ENCODE measurements at regions of chr14 and their contacts with region 1.

Region 1: GRCh38 chr14:75783184-75783583 is 122.1 kb downstream of the TTLL5 start:
- DNase-seq: no peak
- H3K4me3 ChIP-seq: no peak overlapping the region
- H3K27ac ChIP-seq: no peak overlapping the region
- H3K4me1 ChIP-seq: no peaks in the 10 kb centered on the region
- H3K27me3 ChIP-seq: no peaks in the 10 kb centered on the region
- CTCF ChIP-seq: no peak
- POLR2A ChIP-seq: no peak

Region 2: DNA sequence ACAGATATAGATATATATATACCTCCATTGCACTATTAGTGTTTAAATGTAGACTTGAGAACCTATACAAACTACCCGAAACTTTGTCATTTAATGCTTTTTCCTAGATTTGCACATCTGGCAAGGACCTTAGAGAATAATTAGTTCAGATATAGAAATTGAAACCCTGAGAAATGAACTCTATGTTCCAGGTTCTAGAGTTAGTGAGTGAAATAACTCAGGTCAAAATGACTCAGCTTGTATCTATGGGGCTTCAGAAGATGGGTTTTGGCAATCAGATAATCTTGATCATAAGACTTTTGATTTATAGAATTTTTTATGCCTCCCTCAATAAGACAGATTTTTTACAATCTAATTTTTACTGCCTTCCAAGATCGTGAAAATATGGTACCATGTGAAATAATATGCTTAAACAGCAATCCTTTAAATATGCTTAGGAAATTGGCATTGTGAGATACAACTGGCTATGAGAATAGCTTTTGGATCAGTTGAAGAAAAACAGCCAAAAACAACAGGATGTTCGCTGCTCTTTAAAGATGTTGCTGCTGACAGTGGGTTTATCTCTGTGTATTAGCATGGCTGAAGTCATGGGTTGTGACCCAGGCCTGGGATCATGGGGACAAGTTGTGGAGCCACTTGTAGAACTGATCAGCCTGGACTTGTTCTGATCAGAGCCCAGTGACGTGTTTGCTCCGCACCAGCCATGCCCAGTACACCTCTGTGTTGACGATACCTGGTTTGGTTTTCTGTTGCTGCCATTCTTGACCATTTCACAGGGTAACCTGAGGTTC is 58.6 kb before region 1 on chr14:
- intact Hi-C with region 1: loop called (anchors 1 kb)
- DNase-seq: no peak
- H3K4me3 ChIP-seq: no peak overlapping the region
- H3K27ac ChIP-seq: peak overlapping the region; percentile 56
- H3K4me1 ChIP-seq: peaks cover 34% of the 10 kb centered on the region
- H3K27me3 ChIP-seq: no peaks in the 10 kb centered on the region
- CTCF ChIP-seq: no peak
- POLR2A ChIP-seq: no peak

Region 3: GRCh38 chr14:75752907-75753594 is 30.1 kb before region 1 on chr14:
- intact Hi-C with region 1: no loop called
- DNase-seq: no peak
- H3K4me3 ChIP-seq: no peak overlapping the region
- H3K27ac ChIP-seq: peak overlapping the region; percentile 17
- H3K4me1 ChIP-seq: peaks cover 10% of the 10 kb centered on the region
- H3K27me3 ChIP-seq: no peaks in the 10 kb centered on the region
- CTCF ChIP-seq: no peak
- POLR2A ChIP-seq: no peak

Region 4: GRCh38 chr14:75861161-75861621 is 78.0 kb after region 1 on chr14:
- intact Hi-C with region 1: no loop called
- DNase-seq: no peak
- H3K4me3 ChIP-seq: no peak overlapping the region
- H3K27ac ChIP-seq: no peak overlapping the region
- H3K4me1 ChIP-seq: no peaks in the 10 kb centered on the region
- H3K27me3 ChIP-seq: no peaks in the 10 kb centered on the region
- CTCF ChIP-seq: no peak
- POLR2A ChIP-seq: no peak

Region 5: DNA sequence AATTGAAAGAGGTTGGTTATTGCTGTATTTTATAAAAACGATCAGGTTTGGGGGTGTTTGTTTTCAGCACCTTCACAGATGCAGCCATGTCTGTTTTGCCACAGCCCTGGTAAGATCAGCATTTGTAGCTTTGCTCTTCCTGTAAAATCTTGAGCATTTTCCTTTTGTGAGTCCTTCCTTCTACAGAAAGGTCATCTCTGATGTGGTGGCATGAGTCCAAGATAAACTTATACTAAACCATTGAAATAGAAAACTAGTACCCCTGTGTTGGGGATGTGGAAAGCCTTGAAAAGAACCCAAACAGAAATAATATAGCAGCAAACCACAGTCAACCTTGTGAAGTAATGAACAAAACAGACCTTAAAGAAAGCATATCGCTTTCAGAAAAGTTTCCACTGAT is 113.2 kb after region 1 on chr14:
- intact Hi-C with region 1: no loop called
- DNase-seq: no peak
- H3K4me3 ChIP-seq: no peak overlapping the region
- H3K27ac ChIP-seq: no peak overlapping the region
- H3K4me1 ChIP-seq: no peaks in the 10 kb centered on the region
- H3K27me3 ChIP-seq: no peaks in the 10 kb centered on the region
- CTCF ChIP-seq: no peak
- POLR2A ChIP-seq: no peak

Measured in vagina (tissue), 2 donors.